H1 (cell line): ENCODE measurements at regions of chr19 and their contacts with region 1.

Region 1: GRCh38 chr19:294946-295686 is 3.9 kb upstream of the PLPP2 start:
- DNase-seq: peak in 1 of 2 experiments; percentile 91
- H3K4me3 ChIP-seq: peak overlapping the region in 2 of 4 experiments; percentile 29 to 51; a peak in 3 of 8 replicates
- H3K27ac ChIP-seq: no peak overlapping the region
- H3K4me1 ChIP-seq: peaks cover 0 to 8% (median 7%) of the 10 kb centered on the region in 4 experiments; a peak in 6 of 7 replicates
- H3K27me3 ChIP-seq: peaks cover 0 to 16% (median 8%) of the 10 kb centered on the region in 4 experiments; a peak in 3 of 7 replicates
- CTCF ChIP-seq: peak; percentile 88 to 97 (median 90)
- EP300 ChIP-seq: no peak
- POLR2A ChIP-seq: no peak
- RAD21 ChIP-seq: peak; percentile 53 to 74

Region 2: GRCh38 chr19:306151-306900 is 11.2 kb after region 1 on chr19:
- CTCF ChIA-PET with region 1: interaction called, 5 read pairs
- POLR2A ChIA-PET with region 1: interaction called, 38 read pairs
- DNase-seq: no peak
- H3K4me3 ChIP-seq: no peak overlapping the region
- H3K27ac ChIP-seq: no peak overlapping the region
- H3K4me1 ChIP-seq: no peaks in the 10 kb centered on the region; a peak in 1 of 7 replicates
- H3K27me3 ChIP-seq: no peaks in the 10 kb centered on the region
- CTCF ChIP-seq: no peak
- EP300 ChIP-seq: no peak
- POLR2A ChIP-seq: no peak
- RAD21 ChIP-seq: no peak